Stomach (tissue), 19 donors: ENCODE measurements at regions of chr5 and their contacts with region 1.

Region 1: DNA sequence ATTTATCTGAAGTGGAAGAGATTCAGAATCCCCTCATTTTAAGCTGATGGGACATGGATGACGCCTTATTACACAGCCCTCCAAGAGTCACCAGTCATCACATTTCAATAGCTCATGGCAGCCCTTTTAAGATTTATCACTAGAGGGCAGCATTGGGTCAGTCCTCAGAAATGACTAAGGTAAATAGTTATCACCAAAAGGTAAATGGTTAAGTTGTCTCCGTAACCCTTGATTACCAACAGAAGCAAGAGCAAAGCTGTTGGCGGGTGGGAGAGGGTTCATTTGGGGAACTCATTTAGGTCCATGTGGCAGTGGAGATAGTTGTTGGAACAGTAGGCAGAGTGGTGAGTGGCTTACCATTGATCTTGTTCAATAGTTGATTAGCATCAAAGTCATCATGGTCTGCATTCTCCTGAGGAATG is 12.0 kb upstream of the C9 start:
- DNase-seq: peak in 1 of 2 donors; percentile 78
- H3K4me3 ChIP-seq: no peak overlapping the region
- H3K27ac ChIP-seq: no peak overlapping the region
- H3K4me1 ChIP-seq: no peaks in the 10 kb centered on the region
- H3K27me3 ChIP-seq: no peaks in the 10 kb centered on the region
- CTCF ChIP-seq: peak in 5 of 7 experiments; percentile 32 to 72 (median 61)
- EP300 ChIP-seq: no peak
- POLR2A ChIP-seq: no peak

Region 2: DNA sequence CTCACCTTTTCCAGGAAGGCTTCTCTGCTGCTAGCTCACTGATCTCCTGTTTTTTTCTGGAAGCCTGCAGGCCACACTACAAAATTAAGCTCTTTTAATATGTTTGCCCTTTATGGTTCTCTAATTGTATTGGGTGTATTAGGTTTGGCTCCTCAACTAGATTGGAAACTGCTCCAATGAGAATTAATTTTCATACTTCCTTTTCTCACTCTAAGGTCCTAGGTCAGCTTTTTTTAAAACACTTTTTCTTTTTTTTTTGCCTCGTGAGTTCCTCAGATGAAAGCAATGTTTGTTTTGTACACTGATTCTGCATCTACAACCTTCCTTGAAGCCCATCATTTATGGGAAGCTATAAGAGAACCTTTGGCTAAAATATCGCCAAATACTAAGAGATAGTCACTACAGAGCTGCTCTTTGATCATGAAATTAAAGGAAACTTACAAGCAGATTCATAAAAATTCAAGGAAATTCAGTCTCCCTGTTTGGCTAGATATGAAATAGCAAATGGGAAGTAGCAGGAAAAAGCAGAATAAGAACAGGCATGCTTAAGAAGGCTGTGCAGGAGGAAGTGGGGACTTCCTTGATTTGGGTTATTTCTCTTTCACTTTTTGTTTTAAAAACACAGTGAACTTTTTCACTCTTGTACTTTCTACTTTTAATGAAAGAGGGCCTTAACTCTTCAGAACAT is 101.8 kb before region 1 on chr5:
- intact Hi-C with region 1: no loop called
- DNase-seq: peak in 1 of 2 donors; percentile 21
- H3K4me3 ChIP-seq: no peak overlapping the region
- H3K27ac ChIP-seq: peak overlapping the region in 4 of 5 donors; percentile 20 to 85 (median 67)
- H3K4me1 ChIP-seq: peaks cover 0 to 11% (median 6%) of the 10 kb centered on the region in 4 donors
- H3K27me3 ChIP-seq: no peaks in the 10 kb centered on the region
- CTCF ChIP-seq: no peak
- EP300 ChIP-seq: no peak
- POLR2A ChIP-seq: no peak

Region 3: DNA sequence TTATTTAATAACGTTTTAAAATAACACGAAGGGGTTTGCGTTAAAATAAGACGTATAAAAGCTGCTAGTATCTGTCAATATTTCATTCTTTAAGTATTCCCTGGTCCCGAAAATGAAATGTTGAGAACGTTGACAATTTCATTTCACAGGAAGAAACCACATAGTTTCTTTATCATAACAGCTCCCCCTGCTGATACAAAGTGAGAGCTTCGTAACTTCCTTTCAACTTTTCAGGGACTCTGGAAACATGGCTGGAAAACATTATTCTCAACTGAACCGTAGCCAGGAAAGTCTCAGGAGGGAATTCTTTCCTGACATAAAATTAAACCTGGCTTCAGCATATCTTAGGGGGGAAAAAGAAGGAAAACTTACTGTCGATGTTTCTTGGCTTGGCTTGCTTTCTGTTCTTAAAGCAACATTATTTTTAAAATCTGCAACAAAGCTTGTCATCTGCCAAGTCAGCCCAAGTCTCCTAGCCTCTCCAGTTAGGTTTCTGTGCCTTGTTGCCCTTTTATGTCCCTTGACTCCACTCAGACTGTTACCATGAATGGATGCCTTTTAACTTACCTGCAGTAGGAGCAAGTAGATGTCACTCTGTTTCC is 171.3 kb after region 1 on chr5:
- intact Hi-C with region 1: loop called (anchors 5 kb)
- DNase-seq: peak in 1 of 2 donors; percentile 90
- H3K4me3 ChIP-seq: peak overlapping the region in 1 of 4 donors; percentile 3
- H3K27ac ChIP-seq: no peak overlapping the region
- H3K4me1 ChIP-seq: peaks cover 0 to 13% (median 5%) of the 10 kb centered on the region in 4 donors
- H3K27me3 ChIP-seq: no peaks in the 10 kb centered on the region
- CTCF ChIP-seq: peak in 5 of 7 experiments; percentile 39 to 67 (median 59)
- EP300 ChIP-seq: no peak
- POLR2A ChIP-seq: no peak

Region 4: GRCh38 chr5:39815711-39816110 is 439.4 kb after region 1 on chr5:
- intact Hi-C with region 1: no loop called
- DNase-seq: no peak
- H3K4me3 ChIP-seq: no peak overlapping the region
- H3K27ac ChIP-seq: no peak overlapping the region
- H3K4me1 ChIP-seq: no peaks in the 10 kb centered on the region
- H3K27me3 ChIP-seq: no peaks in the 10 kb centered on the region
- CTCF ChIP-seq: no peak
- EP300 ChIP-seq: no peak
- POLR2A ChIP-seq: no peak